ENCODE measurements at regions of chr12 and their contacts with region 1.

Region 1: DNA sequence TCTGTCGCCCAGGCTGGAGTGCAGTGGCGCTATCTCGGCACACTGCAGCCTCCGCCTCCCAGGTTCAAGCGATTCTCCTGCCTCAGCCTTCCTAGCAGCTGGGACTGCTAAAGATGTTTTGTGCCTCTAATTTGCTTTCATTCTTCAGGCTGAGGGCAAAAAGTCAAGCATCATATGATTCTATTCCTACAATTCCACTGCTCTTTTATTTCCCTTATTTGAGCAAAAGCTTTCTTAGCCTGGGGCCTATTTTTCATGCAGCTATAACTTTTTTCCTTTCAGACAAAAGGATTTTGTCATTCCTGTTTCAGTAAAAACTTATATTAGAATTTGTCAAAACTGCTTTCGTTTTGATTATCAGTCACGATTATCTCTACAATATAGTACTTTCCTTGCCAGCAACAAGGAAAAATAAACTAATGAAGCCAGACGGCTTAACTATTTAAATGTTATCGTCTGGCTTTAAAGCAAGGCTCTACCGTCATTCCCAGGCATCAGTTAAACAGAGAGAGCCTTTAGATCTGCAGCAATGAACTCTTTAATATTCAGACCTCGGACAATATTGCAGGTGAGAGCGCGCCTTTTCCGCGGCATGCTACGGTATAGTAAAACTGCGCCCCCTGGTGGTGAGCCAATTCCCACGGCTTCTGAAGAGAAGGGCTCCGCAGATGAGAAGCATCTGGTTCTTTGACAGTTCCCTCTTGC is 1.4 kb upstream of the SLC2A13 start:
- DNase-seq: peak; percentile 90
- ATAC-seq: peak; percentile 42
- H3K4me3 ChIP-seq: peak overlapping the region; percentile 80
- H3K27ac ChIP-seq: no peak overlapping the region
- H3K4me1 ChIP-seq: 0 out of 2 replicates have a peak, but pooled peaks cover 4% of the 10 kb centered on the region
- H3K27me3 ChIP-seq: no peaks in the 10 kb centered on the region
- CTCF ChIP-seq: peak; percentile 92

Region 2: GRCh38 chr12:39764944-39765560 is 342.2 kb before region 1 on chr12:
- CTCF ChIA-PET with region 1: no interaction called
- POLR2A ChIA-PET with region 1: no interaction called
- intact Hi-C with region 1: loop called (anchors 1 kb)
- DNase-seq: peak; percentile 58
- ATAC-seq: peak; percentile 50
- H3K4me3 ChIP-seq: no peak overlapping the region
- H3K27ac ChIP-seq: no peak overlapping the region
- H3K4me1 ChIP-seq: no peaks in the 10 kb centered on the region
- H3K27me3 ChIP-seq: no peaks in the 10 kb centered on the region; the same call in 1 of the 2 replicates
- CTCF ChIP-seq: peak; percentile 91

Region 3: DNA sequence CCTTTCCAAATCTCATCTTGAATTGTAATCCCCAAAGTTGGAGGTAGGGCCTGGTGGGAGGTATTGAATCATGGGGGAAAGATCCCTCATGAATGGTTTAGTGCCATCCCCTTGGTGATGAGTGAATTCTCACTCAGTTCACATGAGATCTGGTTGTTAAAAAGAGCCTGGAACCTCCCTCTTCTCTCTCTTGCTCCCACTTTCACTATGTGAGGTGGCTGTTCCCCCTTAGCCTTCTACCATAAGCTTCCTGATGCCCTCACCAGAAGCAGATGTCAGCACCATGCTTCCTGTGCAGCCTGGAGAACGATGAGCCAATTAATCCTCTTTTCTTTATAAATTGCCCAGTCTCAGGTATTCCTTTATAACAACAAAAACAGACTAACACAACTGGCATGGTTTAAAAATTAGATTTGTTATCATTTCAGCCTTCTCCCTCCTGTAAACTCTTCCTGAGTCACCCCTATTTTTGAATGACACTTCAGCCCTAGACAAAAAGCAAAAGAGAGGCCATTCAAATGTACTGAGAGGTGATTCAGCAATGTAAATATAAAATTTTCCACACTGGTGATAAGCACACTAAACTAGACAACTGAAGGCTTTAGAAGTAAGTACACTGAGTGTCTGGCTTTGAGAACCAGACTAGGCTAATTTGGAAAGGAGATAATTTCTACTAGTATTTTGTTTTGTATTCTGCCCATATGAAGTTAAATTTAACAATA is 275.5 kb before region 1 on chr12:
- CTCF ChIA-PET with region 1: no interaction called
- POLR2A ChIA-PET with region 1: no interaction called
- intact Hi-C with region 1: loop called (anchors 2 kb)
- DNase-seq: peak; percentile 75
- ATAC-seq: peak; percentile 94
- H3K4me3 ChIP-seq: no peak overlapping the region
- H3K27ac ChIP-seq: no peak overlapping the region
- H3K4me1 ChIP-seq: peaks cover 18% of the 10 kb centered on the region
- H3K27me3 ChIP-seq: no peaks in the 10 kb centered on the region
- CTCF ChIP-seq: no peak

Region 4: DNA sequence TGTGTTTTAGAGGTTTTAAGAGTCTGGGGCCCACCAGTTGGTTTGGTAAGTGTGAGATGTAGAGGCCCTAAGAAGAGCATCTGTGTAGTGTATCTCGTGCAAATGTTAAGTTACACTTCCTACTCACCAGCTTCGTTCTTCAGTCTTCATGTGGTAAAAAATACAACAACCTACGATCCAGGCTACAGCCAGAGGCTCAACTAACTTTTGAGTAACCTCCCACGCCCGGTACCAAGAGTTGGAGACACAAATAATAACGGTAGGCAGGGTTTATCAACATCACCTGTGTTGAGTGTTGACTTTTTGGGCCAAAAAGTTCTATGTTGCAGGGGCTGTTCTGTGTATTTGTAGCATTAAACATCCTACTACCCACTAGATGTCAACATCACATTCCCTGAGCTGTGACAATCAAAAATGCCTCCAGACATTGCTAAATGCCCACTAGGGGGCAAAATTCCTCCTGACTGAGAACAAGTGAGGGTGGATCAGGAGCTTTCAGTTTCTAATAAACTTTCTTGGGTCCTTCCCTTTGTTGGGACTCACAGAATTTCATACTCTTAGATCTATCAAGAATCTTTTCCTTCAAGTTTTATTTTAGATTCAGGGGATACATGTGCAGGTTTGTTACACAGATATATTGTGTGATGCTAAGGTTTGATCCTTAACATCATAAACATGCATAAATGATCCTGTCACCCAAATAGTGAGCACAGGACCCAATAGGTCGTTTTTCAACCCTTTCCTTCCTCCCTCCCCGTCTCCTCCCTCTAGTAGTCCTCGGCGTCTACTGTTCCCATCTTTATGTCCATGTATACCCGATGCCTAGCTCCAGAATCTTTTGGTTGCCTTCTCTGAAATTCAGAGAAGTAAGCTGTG is 96.1 kb before region 1 on chr12:
- CTCF ChIA-PET with region 1: interaction called, 19 read pairs
- POLR2A ChIA-PET with region 1: no interaction called
- intact Hi-C with region 1: loop called (anchors 1 kb)
- DNase-seq: peak; percentile 76
- ATAC-seq: peak; percentile 94
- H3K4me3 ChIP-seq: no peak overlapping the region
- H3K27ac ChIP-seq: no peak overlapping the region
- H3K4me1 ChIP-seq: peaks cover 5% of the 10 kb centered on the region
- H3K27me3 ChIP-seq: no peaks in the 10 kb centered on the region
- CTCF ChIP-seq: peak; percentile 93

Region 5: GRCh38 chr12:40032433-40033241 is 74.6 kb before region 1 on chr12:
- CTCF ChIA-PET with region 1: no interaction called
- POLR2A ChIA-PET with region 1: interaction called, 3 read pairs
- intact Hi-C with region 1: loop called (anchors 1 kb)
- DNase-seq: no peak
- ATAC-seq: no peak
- H3K4me3 ChIP-seq: no peak overlapping the region
- H3K27ac ChIP-seq: no peak overlapping the region
- H3K4me1 ChIP-seq: no peaks in the 10 kb centered on the region
- H3K27me3 ChIP-seq: no peaks in the 10 kb centered on the region
- CTCF ChIP-seq: no peak

Region 6: GRCh38 chr12:40054554-40055227 is 52.6 kb before region 1 on chr12:
- CTCF ChIA-PET with region 1: no interaction called
- POLR2A ChIA-PET with region 1: no interaction called
- intact Hi-C with region 1: loop called (anchors 2 kb)
- DNase-seq: peak; percentile 61
- ATAC-seq: peak; percentile 99
- H3K4me3 ChIP-seq: no peak overlapping the region
- H3K27ac ChIP-seq: no peak overlapping the region
- H3K4me1 ChIP-seq: no peaks in the 10 kb centered on the region
- H3K27me3 ChIP-seq: no peaks in the 10 kb centered on the region
- CTCF ChIP-seq: no peak

Region 7: DNA sequence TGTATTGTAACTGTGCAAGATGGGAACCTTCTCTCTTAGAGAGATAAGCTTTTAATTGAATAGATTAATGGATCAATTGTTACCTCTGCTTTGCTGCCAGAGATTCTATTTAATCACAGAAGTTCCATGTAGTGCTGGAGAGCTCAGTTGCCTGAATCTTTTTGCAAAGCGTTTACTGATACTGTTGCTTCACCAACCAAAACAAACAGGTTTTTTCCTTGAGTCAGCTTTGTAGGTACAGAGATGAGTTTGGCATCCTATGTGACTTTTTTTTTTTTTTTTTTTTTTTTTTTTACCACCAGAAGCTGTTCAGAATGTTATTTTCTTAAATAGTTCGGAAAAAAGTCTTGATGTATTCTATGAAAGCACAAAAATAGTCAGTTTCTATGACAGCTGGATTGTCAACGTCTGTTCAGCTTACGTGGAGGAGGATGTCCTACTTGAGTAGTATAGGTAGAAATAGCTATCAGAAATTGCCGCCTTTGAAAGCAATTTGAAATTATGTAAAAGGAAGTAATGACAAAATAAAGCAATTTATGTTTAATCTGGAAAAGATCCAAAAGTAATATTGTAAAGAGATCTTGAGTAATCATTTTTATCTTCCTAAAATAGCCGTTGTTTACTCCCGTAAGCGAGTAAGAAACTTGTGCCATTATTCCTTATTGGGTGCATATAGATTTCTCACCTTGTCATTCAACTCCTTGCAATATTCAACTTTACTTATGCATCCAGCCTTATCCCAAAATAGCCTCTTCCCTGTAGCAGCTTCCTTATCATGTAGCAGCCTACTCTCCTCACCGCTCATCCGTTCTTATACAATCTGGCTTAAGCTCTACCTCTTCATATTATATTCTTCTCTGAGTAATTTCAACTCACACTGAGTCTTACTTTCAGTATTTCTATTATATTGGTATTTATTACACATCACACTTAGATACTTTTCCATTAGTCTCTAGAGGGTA is 122.7 kb after region 1 on chr12:
- CTCF ChIA-PET with region 1: no interaction called
- POLR2A ChIA-PET with region 1: interaction called, 12 read pairs
- intact Hi-C with region 1: no loop called
- DNase-seq: no peak
- ATAC-seq: no peak
- H3K4me3 ChIP-seq: no peak overlapping the region
- H3K27ac ChIP-seq: no peak overlapping the region
- H3K4me1 ChIP-seq: no peaks in the 10 kb centered on the region
- H3K27me3 ChIP-seq: peaks cover 5% of the 10 kb centered on the region; the same call in 1 of the 2 replicates
- CTCF ChIP-seq: no peak